ENCODE measurements at regions of chr20 and their contacts with region 1.

Region 1: DNA sequence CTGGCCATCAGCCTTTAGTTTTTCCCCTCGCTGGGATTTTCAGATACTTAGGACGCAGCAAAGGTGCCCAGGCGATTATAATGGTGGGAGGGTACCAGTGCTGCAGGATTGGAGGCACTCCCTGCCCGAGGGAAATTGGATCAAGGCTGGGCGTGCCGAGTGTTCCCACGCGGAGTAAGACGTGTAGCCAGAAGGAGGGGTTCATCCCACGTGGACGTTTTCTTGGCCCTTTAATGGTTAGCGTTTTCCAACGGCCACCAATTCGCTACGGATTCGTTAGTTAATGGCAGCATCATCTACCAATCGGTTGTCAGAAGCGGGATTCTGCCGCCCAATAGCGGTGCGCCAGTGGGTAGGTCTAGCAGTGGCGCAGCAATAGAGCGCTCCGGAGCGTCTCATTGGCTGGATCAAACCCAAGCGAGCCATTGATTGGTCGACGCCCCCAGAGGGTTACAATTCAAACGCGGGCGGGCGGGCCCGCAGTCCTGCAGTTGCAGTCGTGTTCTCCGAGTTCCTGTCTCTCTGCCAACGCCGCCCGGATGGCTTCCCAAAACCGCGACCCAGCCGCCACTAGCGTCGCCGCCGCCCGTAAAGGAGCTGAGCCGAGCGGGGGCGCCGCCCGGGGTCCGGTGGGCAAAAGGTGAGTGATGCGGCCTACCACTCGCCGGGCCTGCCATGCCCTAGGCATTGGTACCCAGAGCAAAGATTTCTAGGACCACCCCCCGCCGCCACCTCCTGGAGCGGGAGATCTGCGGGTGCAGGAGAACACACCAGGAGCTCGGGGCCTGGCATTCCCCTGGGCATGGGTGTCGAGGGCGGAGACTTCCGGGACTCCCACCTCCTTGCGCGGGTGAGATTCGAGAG is at the start of gene UBE2C:
- DNase-seq: peak in 1 of 2 donors; percentile 99
- H3K4me3 ChIP-seq: peak within 1 kb of the TSS; percentile 50 to 59
- H3K27ac ChIP-seq: peak within 1 kb of the TSS; percentile 23
- H3K4me1 ChIP-seq: peaks cover 10% of the 10 kb centered on the region
- H3K27me3 ChIP-seq: no peaks in the 10 kb centered on the region
- CTCF ChIP-seq: no peak
- POLR2A ChIP-seq: no peak
- total RNA-seq, gene UBE2C: 7.6 TPM

Region 2: GRCh38 chr20:45742581-45742980 is 69.8 kb before region 1 on chr20:
- intact Hi-C with region 1: no loop called
- DNase-seq: no peak
- H3K4me3 ChIP-seq: no peak overlapping the region
- H3K27ac ChIP-seq: no peak overlapping the region
- H3K4me1 ChIP-seq: no peaks in the 10 kb centered on the region
- H3K27me3 ChIP-seq: no peaks in the 10 kb centered on the region
- CTCF ChIP-seq: no peak
- POLR2A ChIP-seq: no peak

Region 3: DNA sequence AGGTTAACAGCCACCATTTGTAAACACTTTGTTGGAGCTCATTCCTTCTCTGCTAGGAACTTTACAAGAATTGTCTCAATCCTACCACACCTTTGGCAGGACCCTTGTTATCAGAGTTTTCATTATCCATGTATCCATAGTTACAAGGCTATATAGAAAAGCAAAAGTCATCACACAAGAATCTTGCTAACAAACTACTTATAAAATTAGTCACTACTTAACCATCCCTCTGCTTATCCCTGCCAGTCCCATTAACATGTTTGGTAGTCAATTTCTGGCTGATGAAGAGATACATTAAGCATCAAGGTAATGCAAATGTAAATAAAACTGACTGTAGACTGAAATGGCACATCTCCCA is 55.4 kb after region 1 on chr20:
- intact Hi-C with region 1: no loop called
- DNase-seq: no peak
- H3K4me3 ChIP-seq: no peak overlapping the region
- H3K27ac ChIP-seq: no peak overlapping the region
- H3K4me1 ChIP-seq: no peaks in the 10 kb centered on the region
- H3K27me3 ChIP-seq: no peaks in the 10 kb centered on the region
- CTCF ChIP-seq: no peak
- POLR2A ChIP-seq: no peak

Region 4: DNA sequence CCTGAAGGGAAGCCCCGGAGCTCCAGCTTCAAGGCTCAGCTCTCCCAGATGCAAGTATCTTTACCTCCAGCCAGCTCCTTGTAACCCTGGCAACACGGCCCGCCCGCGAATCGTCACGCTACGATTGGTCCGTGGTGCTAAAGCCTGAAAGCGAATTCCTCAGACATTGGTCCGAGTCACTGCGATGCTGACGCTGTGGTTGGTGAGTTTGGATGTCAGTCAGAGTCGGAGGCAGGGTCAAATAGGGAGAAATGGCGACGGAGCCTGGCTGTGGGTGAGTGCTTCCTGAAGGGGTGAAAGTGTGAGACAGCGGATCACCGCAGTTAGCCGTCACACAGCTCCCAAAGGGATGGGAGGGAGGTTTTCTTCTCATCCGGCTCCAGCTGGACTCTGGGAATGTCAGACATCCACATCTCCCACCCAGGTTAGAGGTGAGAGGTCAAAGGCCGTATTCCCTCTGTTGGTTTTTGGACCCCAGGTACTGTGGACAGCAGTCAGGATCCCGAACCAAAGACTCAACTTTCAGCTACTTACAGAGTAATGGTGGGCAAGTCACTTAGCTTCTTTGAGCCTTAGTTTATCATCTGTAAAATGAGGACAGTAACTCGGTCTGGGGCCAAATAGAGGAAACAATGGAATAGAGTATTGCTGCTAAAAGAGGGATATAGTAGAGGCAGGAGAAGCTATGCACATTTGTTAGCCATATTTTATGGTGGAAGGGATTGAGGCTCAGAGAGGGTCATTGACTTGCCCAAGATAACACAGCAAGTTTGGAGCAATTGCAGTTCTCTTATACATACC is 68.8 kb after region 1 on chr20 and contains the start of gene ZSWIM1:
- intact Hi-C with region 1: loop called (anchors 10 kb)
- DNase-seq: peak in 1 of 2 donors; percentile 100
- H3K4me3 ChIP-seq: peak within 1 kb of the TSS; percentile 60 to 80
- H3K27ac ChIP-seq: peak within 1 kb of the TSS; percentile 82
- H3K4me1 ChIP-seq: peaks cover 29% of the 10 kb centered on the region
- H3K27me3 ChIP-seq: no peaks in the 10 kb centered on the region
- CTCF ChIP-seq: no peak
- POLR2A ChIP-seq: peak in 1 of 2 donors; percentile 50
- total RNA-seq, gene ZSWIM1: 4.2 TPM

Region 5: GRCh38 chr20:45969347-45970242 is 157.2 kb after region 1 on chr20:
- intact Hi-C with region 1: loop called (anchors 10 kb)
- DNase-seq: no peak
- H3K4me3 ChIP-seq: peak overlapping the region; percentile 60 to 92
- H3K27ac ChIP-seq: peak overlapping the region; percentile 98
- H3K4me1 ChIP-seq: peaks cover 30% of the 10 kb centered on the region
- H3K27me3 ChIP-seq: no peaks in the 10 kb centered on the region
- CTCF ChIP-seq: peak in 2 of 3 experiments; percentile 10 to 48
- POLR2A ChIP-seq: no peak